ENCODE measurements at regions of chr17 and their contacts with region 1.

Region 1: DNA sequence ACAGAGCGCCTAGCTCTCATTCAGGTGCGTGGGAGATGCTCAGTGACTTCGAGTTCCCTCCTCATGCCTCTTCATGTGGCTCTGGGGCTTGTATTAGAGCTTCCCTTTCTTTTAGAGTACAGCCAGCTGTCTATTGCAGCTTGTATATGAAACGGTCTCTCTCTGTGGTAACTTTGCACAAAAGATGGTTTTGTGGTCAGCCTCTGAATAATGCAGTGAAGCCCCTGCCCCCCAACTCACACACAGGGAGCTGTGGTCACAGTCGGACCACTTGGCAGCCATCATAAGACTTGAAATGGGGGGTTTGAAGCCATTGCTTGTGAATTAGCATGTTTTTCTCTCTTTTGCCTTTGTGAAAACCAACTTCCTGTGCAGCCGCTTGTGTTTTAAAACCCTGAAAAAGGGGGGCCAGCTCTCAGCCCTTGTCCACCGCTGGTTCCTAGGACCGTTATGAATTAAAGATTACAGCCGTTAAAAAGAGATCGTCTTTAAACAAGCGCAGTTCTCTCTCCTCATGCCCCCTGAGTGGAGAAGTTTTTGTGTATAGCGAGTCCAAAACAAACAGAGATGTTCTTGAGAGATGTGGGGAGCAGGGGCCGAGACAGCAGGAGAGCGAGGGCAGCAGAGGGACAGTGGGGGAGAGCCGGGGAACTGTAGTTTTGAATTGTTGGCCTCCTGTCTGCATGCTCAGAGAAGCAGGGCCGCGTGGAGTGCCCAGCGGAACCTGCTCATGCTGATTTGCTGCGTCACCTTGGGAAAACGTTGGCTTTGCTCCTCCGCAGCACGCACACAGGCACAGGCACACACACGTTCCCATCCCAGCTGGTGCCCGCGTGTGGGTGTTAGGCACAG is 199.0 kb downstream of the MSI2 start:
- DNase-seq: peak; percentile 87
- ATAC-seq: peak; percentile 70
- H3K4me3 Mint-ChIP-seq: peak overlapping the region; percentile 57
- H3K27ac Mint-ChIP-seq: peak overlapping the region; percentile 96
- H3K4me1 Mint-ChIP-seq: peaks cover 75% of the 10 kb centered on the region
- H3K27me3 Mint-ChIP-seq: no peaks in the 10 kb centered on the region

Region 2: DNA sequence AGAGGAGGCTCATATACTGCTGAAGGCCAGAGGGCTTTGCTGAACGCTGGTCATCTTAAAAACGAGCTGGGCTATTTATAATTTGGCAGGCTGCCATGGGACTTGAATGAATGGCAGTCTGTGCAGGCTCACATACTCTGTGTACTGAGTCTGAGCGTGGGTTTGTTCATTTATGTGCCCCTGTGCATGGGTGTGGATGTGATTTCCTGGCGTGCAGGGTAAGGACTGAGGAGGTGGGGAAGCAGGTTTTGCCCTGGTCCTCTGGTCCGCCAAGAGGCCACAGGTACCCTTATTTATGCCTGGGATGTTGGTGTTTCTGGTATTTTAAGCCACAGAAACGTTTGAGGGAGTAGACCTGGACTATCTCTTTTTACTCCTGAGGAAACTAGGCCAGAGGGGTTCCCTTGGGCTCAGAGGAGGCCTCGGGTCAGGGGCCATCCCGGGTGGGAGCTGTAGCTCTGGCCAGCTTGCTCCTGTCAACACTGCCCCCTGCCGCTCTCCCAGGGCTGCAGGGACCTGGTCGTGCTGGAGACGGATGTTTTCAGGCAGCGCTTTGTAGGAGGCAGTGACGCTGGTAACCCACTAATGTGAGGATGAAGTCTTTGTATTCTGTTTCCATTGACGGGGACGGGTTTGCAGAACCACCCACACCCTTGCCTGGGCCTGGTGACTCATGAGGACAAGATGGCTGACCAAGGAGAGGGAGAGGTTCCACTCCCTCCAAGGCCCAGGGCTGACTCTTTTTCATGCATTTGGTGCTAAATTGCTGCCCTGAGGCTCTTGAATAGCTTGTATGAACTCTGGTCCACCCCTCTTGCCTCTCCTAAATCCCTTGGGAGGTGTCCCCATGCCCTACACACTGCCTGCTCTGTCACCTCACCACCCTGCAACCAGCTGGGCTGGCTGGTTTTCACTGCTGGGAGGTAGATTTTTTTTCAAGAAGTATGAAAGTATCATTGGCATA is 14.5 kb before region 1 on chr17:
- CTCF ChIA-PET with region 1: interaction called, 24 read pairs
- DNase-seq: peak; percentile 80
- ATAC-seq: peak; percentile 80
- H3K4me3 Mint-ChIP-seq: peak overlapping the region; percentile 10
- H3K27ac Mint-ChIP-seq: peak overlapping the region; percentile 85
- H3K4me1 Mint-ChIP-seq: peaks cover 55% of the 10 kb centered on the region
- H3K27me3 Mint-ChIP-seq: no peaks in the 10 kb centered on the region

Region 3: DNA sequence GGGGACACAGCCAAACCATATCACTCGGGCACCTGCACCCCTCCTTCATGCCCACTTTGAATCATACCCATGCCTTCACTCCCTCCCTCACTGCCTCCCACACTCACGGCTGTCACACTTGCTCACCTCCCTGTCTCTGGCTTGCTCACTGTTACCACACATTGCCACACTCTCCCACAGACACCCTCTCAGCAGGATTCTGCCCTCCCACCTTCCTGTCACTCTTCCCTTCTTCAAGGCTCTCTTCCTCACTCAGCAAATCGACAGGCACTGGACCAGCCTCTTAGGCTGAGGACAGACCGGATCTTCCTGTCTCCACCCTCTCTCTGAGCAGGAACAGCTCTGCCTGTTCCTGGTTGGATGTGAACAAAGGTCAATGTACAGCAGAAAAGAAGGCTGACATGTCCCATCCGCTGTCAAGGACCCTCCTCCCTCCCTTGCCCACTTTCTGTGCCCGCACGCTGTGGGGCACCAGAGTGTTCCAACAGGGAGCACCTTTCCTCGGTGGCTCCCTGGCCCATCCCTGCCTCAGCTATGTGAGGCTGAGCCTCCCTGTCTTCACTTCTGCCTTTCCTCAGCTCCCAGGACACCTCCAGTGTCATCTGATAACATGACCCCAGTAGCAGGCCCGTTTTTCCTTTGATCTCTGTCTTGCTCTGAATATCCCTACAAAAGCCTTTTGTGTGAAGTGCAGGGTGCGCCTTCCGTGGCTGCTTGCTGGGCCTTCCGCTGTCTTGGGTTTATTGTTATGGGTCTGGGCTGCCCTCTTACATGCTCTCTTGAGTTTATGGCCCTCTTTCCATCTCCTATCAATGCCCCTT is 242.8 kb after region 1 on chr17:
- CTCF ChIA-PET with region 1: no interaction called
- DNase-seq: no peak
- ATAC-seq: no peak
- H3K4me3 Mint-ChIP-seq: no peak overlapping the region
- H3K27ac Mint-ChIP-seq: no peak overlapping the region
- H3K4me1 Mint-ChIP-seq: peaks cover 6% of the 10 kb centered on the region
- H3K27me3 Mint-ChIP-seq: no peaks in the 10 kb centered on the region

Measured in activated CD8-positive, alpha-beta memory T cell treated with anti-CD3 and anti-CD28 coated beads, Interleukin-2, amount 10 ng/mL, durations not matched to agents 7 days and 5 days (primary cell).